HepG2 (cell line): ENCODE measurements at regions of chr2 and their contacts with region 1.

Region 1: GRCh38 chr2:143162123-143162837 is 33.1 kb downstream of the ARHGAP15 start:
- DNase-seq: peak; percentile 49
- ATAC-seq: peak; percentile 100
- H3K4me3 ChIP-seq: no peak overlapping the region
- H3K27ac ChIP-seq: no peak overlapping the region
- H3K4me1 ChIP-seq: no peaks in the 10 kb centered on the region
- H3K27me3 ChIP-seq: no peaks in the 10 kb centered on the region; a peak in 2 of 5 replicates
- CTCF ChIP-seq: peak; percentile 86
- EP300 ChIP-seq: no peak
- POLR2A ChIP-seq: no peak
- RAD21 ChIP-seq: peak; percentile 51; the same call in 1 of the 2 replicates

Region 2: GRCh38 chr2:142824756-142825155 is 337.5 kb before region 1 on chr2:
- CTCF ChIA-PET with region 1: no interaction called
- POLR2A ChIA-PET with region 1: no interaction called
- in situ Hi-C with region 1: no loop called
- intact Hi-C with region 1: no loop called
- DNase-seq: no peak
- ATAC-seq: no peak
- H3K4me3 ChIP-seq: no peak overlapping the region
- H3K27ac ChIP-seq: no peak overlapping the region
- H3K4me1 ChIP-seq: no peaks in the 10 kb centered on the region
- H3K27me3 ChIP-seq: no peaks in the 10 kb centered on the region
- CTCF ChIP-seq: no peak
- EP300 ChIP-seq: no peak
- POLR2A ChIP-seq: no peak
- RAD21 ChIP-seq: no peak

Region 3: GRCh38 chr2:143051465-143051864 is 110.8 kb before region 1 on chr2:
- CTCF ChIA-PET with region 1: no interaction called
- POLR2A ChIA-PET with region 1: no interaction called
- in situ Hi-C with region 1: no loop called
- intact Hi-C with region 1: no loop called
- DNase-seq: no peak
- ATAC-seq: no peak
- H3K4me3 ChIP-seq: no peak overlapping the region
- H3K27ac ChIP-seq: no peak overlapping the region
- H3K4me1 ChIP-seq: no peaks in the 10 kb centered on the region
- H3K27me3 ChIP-seq: no peaks in the 10 kb centered on the region
- CTCF ChIP-seq: no peak
- EP300 ChIP-seq: no peak
- POLR2A ChIP-seq: no peak
- RAD21 ChIP-seq: no peak

Region 4: DNA sequence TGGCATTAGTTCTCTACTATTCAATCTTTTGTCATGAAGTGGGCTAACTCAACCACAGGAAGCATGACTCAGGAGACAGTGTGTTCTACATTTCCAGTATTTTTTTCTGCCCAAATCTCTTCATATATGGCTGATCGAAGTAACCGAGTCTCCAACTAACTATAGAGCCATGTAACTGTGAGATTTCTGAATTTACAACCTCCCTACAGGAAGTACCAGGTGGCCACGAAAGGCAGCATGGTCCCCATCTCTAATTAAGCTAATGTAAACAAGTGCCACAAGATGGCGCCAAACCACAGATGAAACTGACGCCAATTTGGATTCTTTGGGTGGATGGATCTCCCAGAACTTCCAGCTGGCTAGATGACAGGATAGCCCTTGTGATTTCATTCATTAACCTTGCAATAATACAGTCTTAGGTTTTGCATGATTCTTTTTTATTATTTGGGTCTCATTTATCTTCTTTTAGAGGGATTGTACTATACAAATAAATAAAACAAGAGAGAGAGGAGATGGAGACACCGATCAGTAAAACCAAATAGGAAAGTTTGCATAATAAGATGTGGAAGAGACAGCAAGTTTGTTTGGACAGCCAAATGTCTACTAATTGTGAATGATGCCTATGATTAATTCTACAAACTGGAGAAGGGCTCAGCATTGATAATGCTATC is 51.4 kb before region 1 on chr2:
- CTCF ChIA-PET with region 1: no interaction called
- POLR2A ChIA-PET with region 1: no interaction called
- in situ Hi-C with region 1: no loop called
- intact Hi-C with region 1: loop called (anchors 2 kb)
- DNase-seq: peak; percentile 68
- ATAC-seq: peak; percentile 90
- H3K4me3 ChIP-seq: no peak overlapping the region
- H3K27ac ChIP-seq: no peak overlapping the region
- H3K4me1 ChIP-seq: no peaks in the 10 kb centered on the region
- H3K27me3 ChIP-seq: no peaks in the 10 kb centered on the region
- CTCF ChIP-seq: peak; percentile 87
- EP300 ChIP-seq: no peak
- POLR2A ChIP-seq: no peak
- RAD21 ChIP-seq: no peak; the same call in 1 of the 2 replicates

Region 5: DNA sequence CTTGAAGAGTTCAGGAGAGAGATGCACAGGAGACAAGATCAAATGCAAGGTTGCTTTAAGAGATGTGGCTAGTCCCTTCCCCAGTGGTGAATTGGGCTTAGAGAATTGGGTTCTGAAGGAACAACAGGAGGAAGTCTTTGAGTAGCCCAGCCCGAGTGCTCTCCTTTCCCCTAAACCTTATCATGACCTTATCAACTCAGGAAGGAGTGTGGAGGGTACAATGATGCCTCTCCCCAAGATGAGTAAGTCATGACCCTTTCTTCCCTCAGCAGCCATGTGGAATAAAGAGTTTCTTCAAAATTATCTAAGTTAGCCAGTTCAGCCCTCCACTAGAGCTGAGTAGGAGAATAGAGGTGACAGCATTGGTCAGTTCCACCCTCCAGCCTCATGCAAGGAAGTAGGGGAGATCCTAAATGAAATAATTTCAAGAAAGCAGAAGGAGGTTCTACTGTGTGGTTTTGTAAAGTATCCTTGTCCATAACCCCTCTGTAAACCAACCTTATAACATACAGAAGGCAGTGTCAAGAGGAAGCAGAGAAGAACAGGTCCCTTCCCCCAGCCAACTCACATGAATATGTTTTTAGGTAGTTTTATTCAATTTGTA is 55.3 kb after region 1 on chr2:
- CTCF ChIA-PET with region 1: interaction called, 3 read pairs
- POLR2A ChIA-PET with region 1: no interaction called
- in situ Hi-C with region 1: no loop called
- intact Hi-C with region 1: loop called (anchors 1 kb)
- DNase-seq: no peak
- ATAC-seq: no peak
- H3K4me3 ChIP-seq: no peak overlapping the region
- H3K27ac ChIP-seq: no peak overlapping the region
- H3K4me1 ChIP-seq: no peaks in the 10 kb centered on the region
- H3K27me3 ChIP-seq: no peaks in the 10 kb centered on the region
- CTCF ChIP-seq: no peak
- EP300 ChIP-seq: no peak
- POLR2A ChIP-seq: no peak
- RAD21 ChIP-seq: no peak

Region 6: GRCh38 chr2:143284087-143284675 is 121.9 kb after region 1 on chr2:
- CTCF ChIA-PET with region 1: no interaction called
- POLR2A ChIA-PET with region 1: no interaction called
- in situ Hi-C with region 1: no loop called
- intact Hi-C with region 1: loop called (anchors 1 kb)
- DNase-seq: peak; percentile 35
- ATAC-seq: peak; percentile 93
- H3K4me3 ChIP-seq: no peak overlapping the region
- H3K27ac ChIP-seq: no peak overlapping the region
- H3K4me1 ChIP-seq: no peaks in the 10 kb centered on the region
- H3K27me3 ChIP-seq: no peaks in the 10 kb centered on the region
- CTCF ChIP-seq: peak; percentile 73
- EP300 ChIP-seq: no peak
- POLR2A ChIP-seq: no peak
- RAD21 ChIP-seq: no peak